IMR-90 (cell line): ENCODE measurements at regions of chr4 and their contacts with region 1.

Region 1: GRCh38 chr4:67762086-67762485 is 7.9 kb upstream of the GNRHR start:
- DNase-seq: peak; percentile 59
- ATAC-seq: peak; percentile 62
- H3K4me3 ChIP-seq: no peak overlapping the region
- H3K27ac ChIP-seq: no peak overlapping the region
- H3K4me1 ChIP-seq: no peaks in the 10 kb centered on the region
- H3K27me3 ChIP-seq: no peaks in the 10 kb centered on the region
- CTCF ChIP-seq: no peak
- POLR2A ChIP-seq: no peak
- RAD21 ChIP-seq: no peak

Region 2: GRCh38 chr4:67779631-67780030 is 17.5 kb after region 1 on chr4:
- CTCF ChIA-PET with region 1: interaction called, 11 read pairs
- POLR2A ChIA-PET with region 1: no interaction called
- dilution Hi-C with region 1: no loop called
- in situ Hi-C with region 1: no loop called
- intact Hi-C with region 1: no loop called
- DNase-seq: no peak
- ATAC-seq: no peak
- H3K4me3 ChIP-seq: no peak overlapping the region
- H3K27ac ChIP-seq: no peak overlapping the region
- H3K4me1 ChIP-seq: no peaks in the 10 kb centered on the region
- H3K27me3 ChIP-seq: no peaks in the 10 kb centered on the region
- CTCF ChIP-seq: no peak
- POLR2A ChIP-seq: no peak
- RAD21 ChIP-seq: no peak

Region 3: DNA sequence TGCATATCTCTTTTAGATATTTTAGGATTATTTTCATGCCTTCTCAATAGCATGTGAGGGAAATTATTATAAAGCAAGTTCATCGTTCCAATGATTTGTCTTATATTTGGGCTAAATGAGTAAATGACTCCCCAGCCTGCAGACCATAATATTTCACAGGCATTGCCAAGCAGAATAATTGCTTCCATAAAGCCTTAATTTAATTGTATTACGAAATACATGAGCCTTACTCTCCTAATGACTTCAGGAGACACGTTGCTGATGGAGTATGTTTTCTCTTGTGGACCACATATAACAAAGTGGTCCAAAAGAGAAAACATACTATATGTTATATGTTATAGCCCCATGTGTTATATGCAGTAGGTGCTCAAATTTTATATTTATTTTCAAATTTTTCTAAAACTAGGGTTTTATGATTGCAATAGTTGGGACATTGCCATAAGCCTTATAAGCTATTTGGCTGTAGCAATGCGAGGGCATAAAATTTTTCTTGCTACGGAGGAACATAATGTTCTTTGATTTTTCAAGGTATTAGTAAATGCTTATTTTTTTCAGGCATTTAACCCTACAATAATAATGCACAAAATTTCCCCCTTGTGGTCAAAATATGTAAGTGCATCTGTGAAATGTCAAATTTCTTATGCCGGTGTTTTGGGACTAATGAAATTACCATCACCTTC is 148.0 kb after region 1 on chr4:
- CTCF ChIA-PET with region 1: no interaction called
- POLR2A ChIA-PET with region 1: no interaction called
- dilution Hi-C with region 1: no loop called
- in situ Hi-C with region 1: no loop called
- intact Hi-C with region 1: loop called (anchors 5 kb)
- DNase-seq: peak; percentile 25
- ATAC-seq: peak; percentile 62; the same call in 1 of the 2 replicates
- H3K4me3 ChIP-seq: no peak overlapping the region
- H3K27ac ChIP-seq: no peak overlapping the region
- H3K4me1 ChIP-seq: no peaks in the 10 kb centered on the region
- H3K27me3 ChIP-seq: no peaks in the 10 kb centered on the region
- CTCF ChIP-seq: peak; percentile 71
- POLR2A ChIP-seq: no peak
- RAD21 ChIP-seq: peak; percentile 60